Heart left ventricle (tissue), 16 donors: ENCODE measurements at regions of chr3 and their contacts with region 1.

Region 1: DNA sequence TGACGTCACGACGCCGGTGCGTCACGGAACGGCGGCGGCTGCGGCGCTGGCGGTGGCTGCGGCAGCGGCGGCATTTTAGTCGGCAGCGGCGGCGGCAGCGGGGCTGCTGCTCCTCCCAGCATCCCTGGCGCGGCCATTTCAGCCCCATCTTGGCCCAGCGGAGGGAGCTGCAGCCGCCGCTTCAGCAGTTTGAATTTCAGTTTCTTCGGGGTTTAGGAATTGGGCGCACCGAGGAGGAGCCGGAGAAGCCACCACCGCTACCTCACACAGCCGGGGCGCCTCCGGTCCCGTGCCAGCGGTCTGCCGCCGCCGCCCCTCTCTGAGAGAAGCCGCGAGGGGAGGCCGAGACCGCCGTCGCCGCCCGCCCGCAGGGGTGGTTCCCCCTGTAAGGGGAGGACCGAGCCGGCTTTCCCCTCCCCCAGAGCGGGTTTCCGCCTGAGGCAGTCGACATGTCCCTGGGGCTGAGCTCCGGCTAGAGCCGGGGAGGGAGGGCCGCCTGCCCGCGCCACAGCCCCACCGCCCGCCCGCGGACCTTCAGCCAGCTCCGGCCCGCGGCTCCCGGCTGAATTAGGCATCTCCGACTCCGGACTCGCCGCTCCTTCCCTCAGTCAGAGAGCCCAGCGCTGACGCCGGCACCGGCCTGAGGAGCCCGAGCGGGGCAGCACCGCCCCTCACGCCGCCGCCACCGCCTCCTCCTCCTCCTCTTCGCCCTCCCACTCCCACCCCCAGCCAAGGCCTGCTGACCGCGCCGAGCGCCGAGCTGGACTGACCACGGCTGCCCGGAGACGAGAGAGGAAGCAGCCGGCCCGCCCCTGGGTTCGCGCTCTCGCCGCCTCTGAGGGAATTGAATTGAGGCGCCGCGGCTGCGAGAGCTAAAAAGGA is at the start of gene TSC22D2:
- DNase-seq: peak; percentile 96 to 98 (median 96)
- ATAC-seq: peak; percentile 72 to 89 (median 85)
- H3K4me3 ChIP-seq: peak within 1 kb of the TSS; percentile 71 to 92 (median 86)
- H3K27ac ChIP-seq: peak within 1 kb of the TSS; percentile 96 to 100 (median 99)
- H3K4me1 ChIP-seq: peaks cover 0 to 32% (median 10%) of the 10 kb centered on the region in 12 donors
- H3K27me3 ChIP-seq: no peaks in the 10 kb centered on the region
- CTCF ChIP-seq: peak in 5 of 12 donors; percentile 14 to 43 (median 23)
- POLR2A ChIP-seq: peak; percentile 98 to 99
- total RNA-seq, gene TSC22D2: 12.7 to 55.8 (median 32.6) TPM

Region 2: DNA sequence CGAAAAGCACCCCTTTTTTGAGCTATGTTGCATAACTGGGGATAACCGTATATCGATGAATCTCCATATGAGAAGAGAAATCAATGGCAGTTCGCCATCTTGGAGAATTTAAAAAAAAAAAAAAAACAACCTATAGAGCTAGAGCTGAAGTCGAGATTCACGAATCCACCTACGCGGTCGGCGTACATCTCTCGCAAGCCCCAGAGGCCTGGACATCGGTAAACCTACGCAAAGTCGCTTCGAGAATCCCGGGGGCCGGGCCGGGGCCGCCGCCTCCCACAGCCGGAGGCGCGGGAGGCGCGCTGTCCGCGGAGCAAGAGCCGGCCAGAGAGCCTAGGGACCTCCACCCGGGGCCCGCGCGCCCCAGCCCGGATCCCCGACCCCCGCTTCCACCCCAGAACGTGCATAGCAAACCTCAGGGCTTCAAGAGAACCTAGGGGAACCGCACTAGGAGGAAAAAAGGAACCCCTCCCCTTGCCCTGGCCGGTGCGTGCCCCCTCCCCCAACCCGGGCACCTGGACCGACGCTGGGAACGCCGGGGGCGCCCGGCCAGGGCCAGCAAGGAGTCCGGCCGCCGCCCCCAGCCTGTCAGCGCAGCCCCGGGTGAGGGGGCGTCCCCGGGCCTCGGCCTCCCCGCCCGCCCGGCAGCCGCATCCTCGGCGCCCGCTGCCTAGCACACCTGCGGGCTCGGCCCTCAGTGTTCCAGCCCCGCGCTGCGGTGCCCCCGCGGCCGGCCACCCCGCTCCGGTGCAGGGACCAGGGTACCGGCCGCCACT is 438.3 kb before region 1 on chr3:
- intact Hi-C with region 1: loop called in 2 of 10 experiments (anchors 2 to 10 kb)
- DNase-seq: peak; percentile 80 to 88 (median 82)
- ATAC-seq: peak in 3 of 4 donors; percentile 70 to 77 (median 76)
- H3K4me3 ChIP-seq: peak overlapping the region; percentile 62 to 93 (median 82)
- H3K27ac ChIP-seq: peak overlapping the region; percentile 73 to 97 (median 90)
- H3K4me1 ChIP-seq: peaks cover 0 to 47% (median 13%) of the 10 kb centered on the region in 12 donors
- H3K27me3 ChIP-seq: peaks cover 0 to 16% (median 0%) of the 10 kb centered on the region in 9 donors
- CTCF ChIP-seq: no peak
- POLR2A ChIP-seq: no peak

Region 3: GRCh38 chr3:150158943-150159625 is 249.4 kb before region 1 on chr3:
- intact Hi-C with region 1: no loop called
- DNase-seq: no peak
- ATAC-seq: peak in 1 of 4 donors; percentile 46
- H3K4me3 ChIP-seq: no peak overlapping the region
- H3K27ac ChIP-seq: no peak overlapping the region
- H3K4me1 ChIP-seq: peaks cover 0 to 3% (median 0%) of the 10 kb centered on the region in 12 donors
- H3K27me3 ChIP-seq: no peaks in the 10 kb centered on the region
- CTCF ChIP-seq: no peak
- POLR2A ChIP-seq: no peak

Region 4: DNA sequence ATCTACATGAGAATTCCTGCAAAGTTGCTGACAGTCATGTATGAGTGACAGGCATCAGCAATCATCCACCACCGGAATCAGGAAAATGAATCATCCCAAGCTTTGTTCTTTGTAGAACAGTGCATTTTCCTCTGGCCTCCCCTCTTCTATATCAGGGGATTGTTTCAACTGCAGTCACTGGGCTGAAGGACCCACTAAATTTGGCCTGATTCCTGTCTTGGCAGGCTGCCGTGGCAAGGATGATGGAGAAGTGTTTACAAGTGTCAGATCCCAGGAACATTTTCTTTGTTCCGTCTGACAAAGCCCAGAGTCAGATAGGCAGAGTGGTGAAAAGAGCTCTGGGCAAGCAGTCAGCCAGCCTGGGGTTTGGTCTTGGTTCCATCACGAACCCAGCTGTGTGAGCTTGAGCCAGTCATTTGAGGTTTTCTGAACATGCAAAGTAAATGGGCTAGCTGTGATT is 175.4 kb before region 1 on chr3:
- intact Hi-C with region 1: loop called in 7 of 10 experiments (anchors 2 to 10 kb)
- DNase-seq: peak; percentile 72 to 90 (median 84)
- ATAC-seq: peak; percentile 95 to 98 (median 97)
- H3K4me3 ChIP-seq: no peak overlapping the region
- H3K27ac ChIP-seq: peak overlapping the region in 10 of 12 donors; percentile 0 to 61 (median 42)
- H3K4me1 ChIP-seq: peaks cover 0 to 39% (median 12%) of the 10 kb centered on the region in 12 donors
- H3K27me3 ChIP-seq: no peaks in the 10 kb centered on the region
- CTCF ChIP-seq: no peak
- POLR2A ChIP-seq: no peak

Region 5: GRCh38 chr3:150286390-150287147 is 121.9 kb before region 1 on chr3:
- intact Hi-C with region 1: loop called in 5 of 10 experiments (anchors 2 to 5 kb)
- DNase-seq: no peak
- ATAC-seq: peak; percentile 50 to 79 (median 71)
- H3K4me3 ChIP-seq: no peak overlapping the region
- H3K27ac ChIP-seq: no peak overlapping the region
- H3K4me1 ChIP-seq: no peaks in the 10 kb centered on the region
- H3K27me3 ChIP-seq: no peaks in the 10 kb centered on the region
- CTCF ChIP-seq: peak; percentile 39 to 70 (median 58)
- POLR2A ChIP-seq: no peak

Region 6: GRCh38 chr3:150371741-150372254 is 36.7 kb before region 1 on chr3:
- intact Hi-C with region 1: loop called in 8 of 10 experiments (anchors 1 to 5 kb)
- DNase-seq: peak in 3 of 5 donors; percentile 30 to 80 (median 75)
- ATAC-seq: peak; percentile 94 to 96 (median 95)
- H3K4me3 ChIP-seq: peak overlapping the region in 11 of 12 donors; percentile 11 to 41 (median 28)
- H3K27ac ChIP-seq: peak overlapping the region; percentile 76 to 95 (median 86)
- H3K4me1 ChIP-seq: peaks cover 6 to 40% (median 24%) of the 10 kb centered on the region in 12 donors
- H3K27me3 ChIP-seq: no peaks in the 10 kb centered on the region
- CTCF ChIP-seq: no peak
- POLR2A ChIP-seq: peak in 1 of 2 donors; percentile 32

Region 7: GRCh38 chr3:150495563-150496168 is 87.2 kb after region 1 on chr3:
- intact Hi-C with region 1: loop called (anchors 2 to 5 kb)
- DNase-seq: no peak
- ATAC-seq: peak in 2 of 4 donors; percentile 41 to 52
- H3K4me3 ChIP-seq: no peak overlapping the region
- H3K27ac ChIP-seq: no peak overlapping the region
- H3K4me1 ChIP-seq: peaks cover 0 to 5% (median 0%) of the 10 kb centered on the region in 12 donors
- H3K27me3 ChIP-seq: no peaks in the 10 kb centered on the region
- CTCF ChIP-seq: peak; percentile 70 to 87 (median 84)
- POLR2A ChIP-seq: no peak